ENCODE measurements at regions of chr5 and their contacts with region 1.

Region 1: DNA sequence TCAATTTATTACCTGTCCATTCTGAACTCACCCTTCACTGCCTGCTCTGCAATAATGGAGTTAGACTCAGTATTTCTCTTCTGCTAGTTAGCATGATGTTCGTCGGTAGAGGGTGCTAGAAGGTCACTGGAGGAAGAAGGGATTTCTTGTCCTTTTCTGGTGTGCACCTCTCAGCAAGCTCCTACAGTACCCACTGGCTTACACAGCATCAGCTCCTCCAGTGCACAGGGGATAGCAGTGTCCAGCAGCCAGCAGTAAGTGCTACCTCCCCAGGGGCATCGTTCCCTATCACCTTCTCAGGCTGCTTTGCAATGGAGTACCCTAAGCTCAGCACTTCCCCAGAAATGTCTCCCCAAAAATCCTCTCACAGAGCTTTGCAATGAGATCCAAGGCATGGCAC is 45.9 kb upstream of the APC start:
- DNase-seq: peak; percentile 27
- H3K4me3 Mint-ChIP-seq: no peak overlapping the region
- H3K27ac Mint-ChIP-seq: no peak overlapping the region
- H3K4me1 Mint-ChIP-seq: no peaks in the 10 kb centered on the region
- H3K27me3 Mint-ChIP-seq: peaks cover 22% of the 10 kb centered on the region

Region 2: DNA sequence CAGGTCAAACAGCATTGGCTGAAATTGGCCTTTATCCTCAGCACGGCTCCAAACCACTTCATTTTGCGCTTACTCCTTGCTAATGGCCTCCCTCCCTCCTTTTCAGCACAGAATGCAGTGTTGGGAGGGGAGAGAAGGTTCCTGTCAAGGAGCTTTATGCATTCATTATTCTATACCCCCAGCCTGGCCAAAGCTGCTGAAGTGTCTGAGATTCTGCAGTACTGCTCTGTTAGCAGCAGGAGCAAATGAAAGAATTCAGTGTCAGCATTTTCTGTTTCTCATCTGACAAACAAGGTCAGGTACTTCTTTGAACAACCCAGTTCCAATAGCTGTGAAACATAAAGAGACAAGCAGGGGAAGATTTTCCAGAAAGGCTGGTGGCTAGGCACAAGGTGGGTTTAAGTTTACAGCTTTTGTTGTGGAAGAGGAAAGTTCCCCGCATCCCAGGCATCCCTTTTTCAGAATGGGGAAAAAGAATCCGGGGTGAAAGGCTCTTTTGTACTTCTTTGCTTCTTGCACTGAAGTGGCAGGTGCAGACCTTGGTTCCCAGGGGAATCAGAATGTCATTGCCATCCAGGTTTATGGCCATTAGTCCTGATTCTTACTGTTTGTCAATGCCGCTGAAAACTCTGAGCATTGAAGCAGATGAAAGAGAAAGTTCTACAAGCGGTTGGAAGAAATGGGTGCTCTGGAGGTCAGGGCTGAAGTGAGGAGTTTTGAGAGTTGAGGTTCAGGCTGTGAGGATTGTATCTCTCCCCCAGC is 63.4 kb before region 1 on chr5:
- CTCF ChIA-PET with region 1: no interaction called
- POLR2A ChIA-PET with region 1: no interaction called
- intact Hi-C with region 1: no loop called
- DNase-seq: no peak
- H3K4me3 Mint-ChIP-seq: no peak overlapping the region
- H3K27ac Mint-ChIP-seq: no peak overlapping the region
- H3K4me1 Mint-ChIP-seq: no peaks in the 10 kb centered on the region
- H3K27me3 Mint-ChIP-seq: peaks cover 28% of the 10 kb centered on the region

Region 3: DNA sequence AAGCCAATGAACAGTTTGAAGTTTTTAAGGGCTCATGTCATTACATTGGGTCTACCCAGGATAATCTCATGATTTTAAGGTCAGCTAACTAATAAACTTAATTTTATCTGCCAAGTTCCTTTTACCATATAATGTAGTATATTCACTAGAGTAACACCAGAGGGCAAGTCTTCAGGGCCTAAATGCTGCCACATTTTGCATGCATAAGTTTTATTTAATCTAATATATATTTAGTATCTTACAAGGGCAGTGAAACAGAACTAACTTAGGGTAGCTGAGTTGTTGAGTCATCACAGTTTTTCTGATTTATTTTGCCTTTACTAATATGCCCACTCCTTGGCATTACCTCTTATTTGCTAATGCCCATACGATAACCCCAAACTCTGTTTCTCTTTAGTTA is 37.9 kb after region 1 on chr5:
- CTCF ChIA-PET with region 1: no interaction called
- POLR2A ChIA-PET with region 1: no interaction called
- intact Hi-C with region 1: no loop called
- DNase-seq: no peak
- H3K4me3 Mint-ChIP-seq: no peak overlapping the region
- H3K27ac Mint-ChIP-seq: no peak overlapping the region
- H3K4me1 Mint-ChIP-seq: peaks cover 6% of the 10 kb centered on the region
- H3K27me3 Mint-ChIP-seq: no peaks in the 10 kb centered on the region

Region 4: DNA sequence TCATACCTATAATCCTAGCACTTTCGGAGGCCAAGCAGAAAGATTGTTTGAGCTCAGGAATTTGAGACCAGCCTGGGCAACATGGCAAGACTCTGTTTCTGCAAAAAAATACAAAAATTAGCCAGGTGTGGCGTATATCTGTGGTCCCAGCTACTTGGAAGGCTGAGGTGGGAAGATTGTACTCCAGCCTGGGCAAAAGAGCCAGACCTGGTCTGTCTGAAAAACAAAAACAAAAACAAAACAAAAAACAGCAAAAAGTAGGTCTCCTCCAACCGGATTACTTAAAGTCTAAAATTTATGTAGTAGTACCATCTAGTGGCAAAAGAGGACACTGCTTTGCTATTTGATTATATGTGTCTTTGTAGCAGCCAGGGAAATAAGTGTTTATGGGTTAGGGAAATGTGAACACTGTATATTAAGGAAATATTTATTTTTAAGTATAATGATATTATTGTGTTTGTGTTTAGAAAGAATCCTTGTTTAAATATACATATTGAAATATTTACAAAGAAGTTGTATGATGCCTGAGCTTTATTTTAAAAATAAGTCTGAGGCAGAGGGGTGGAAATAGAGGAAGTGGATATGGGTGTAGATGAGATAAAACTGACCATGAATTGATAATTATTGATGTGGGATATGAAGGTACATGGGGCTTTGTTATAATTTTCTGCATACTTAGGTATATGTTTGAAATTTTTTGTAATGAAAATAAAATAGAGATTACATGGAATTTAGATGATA is 65.9 kb after region 1 on chr5:
- CTCF ChIA-PET with region 1: interaction called, 63 read pairs
- POLR2A ChIA-PET with region 1: no interaction called
- intact Hi-C with region 1: loop called (anchors 1 kb)
- DNase-seq: no peak
- H3K4me3 Mint-ChIP-seq: no peak overlapping the region
- H3K27ac Mint-ChIP-seq: no peak overlapping the region
- H3K4me1 Mint-ChIP-seq: no peaks in the 10 kb centered on the region
- H3K27me3 Mint-ChIP-seq: no peaks in the 10 kb centered on the region

Measured in activated CD4-positive, alpha-beta memory T cell treated with anti-CD3 and anti-CD28 coated beads for 36 hours (primary cell).